ENCODE measurements at regions of chr13 and their contacts with region 1.

Region 1: DNA sequence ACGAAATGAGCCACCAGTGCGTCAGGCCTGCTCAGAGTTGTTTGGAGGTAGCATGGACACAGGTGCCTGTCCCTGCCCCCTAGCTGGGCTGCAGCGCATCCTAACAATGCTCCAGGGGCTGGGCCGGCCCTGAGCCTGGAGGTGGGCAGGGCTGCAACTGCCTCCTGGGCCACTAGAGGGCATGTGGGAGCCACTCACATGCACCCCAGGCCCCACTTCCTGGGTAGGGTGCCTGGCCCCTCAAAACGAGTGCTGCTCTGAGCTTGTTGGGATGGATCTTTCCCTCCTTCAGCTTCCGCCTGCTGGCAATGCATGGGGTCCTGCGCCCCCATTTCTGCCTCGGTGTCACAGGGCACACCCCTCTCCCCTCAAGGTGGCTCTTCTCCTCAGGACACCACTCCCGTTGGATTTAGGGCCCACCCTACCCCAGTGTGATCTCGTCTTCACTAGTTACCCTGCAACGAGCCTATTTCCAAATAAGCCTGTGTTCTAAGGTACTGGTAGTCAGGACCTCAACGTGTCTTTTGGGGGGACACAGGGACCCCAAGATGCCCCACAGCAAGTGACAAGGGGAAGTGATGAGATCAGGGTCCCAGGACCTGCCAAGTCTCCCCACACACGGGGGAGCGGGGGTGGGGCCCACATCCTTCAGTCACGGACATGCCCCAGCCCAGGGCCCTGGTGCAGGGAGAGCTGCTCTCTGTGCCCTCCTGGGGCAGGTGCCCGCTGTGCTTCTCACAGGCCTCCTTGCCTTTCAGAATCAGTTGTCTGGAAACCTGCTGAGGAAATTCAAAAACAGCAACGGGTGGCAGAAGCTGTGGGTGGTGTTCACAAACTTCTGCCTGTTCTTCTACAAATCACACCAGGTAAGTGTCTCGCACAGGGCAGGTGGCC is 131.3 kb downstream of the STK24 start:
- DNase-seq: peak; percentile 85
- H3K4me3 Mint-ChIP-seq: no peak overlapping the region
- H3K27ac Mint-ChIP-seq: peak overlapping the region; percentile 88
- H3K4me1 Mint-ChIP-seq: peaks cover 17% of the 10 kb centered on the region
- H3K27me3 Mint-ChIP-seq: no peaks in the 10 kb centered on the region

Region 2: DNA sequence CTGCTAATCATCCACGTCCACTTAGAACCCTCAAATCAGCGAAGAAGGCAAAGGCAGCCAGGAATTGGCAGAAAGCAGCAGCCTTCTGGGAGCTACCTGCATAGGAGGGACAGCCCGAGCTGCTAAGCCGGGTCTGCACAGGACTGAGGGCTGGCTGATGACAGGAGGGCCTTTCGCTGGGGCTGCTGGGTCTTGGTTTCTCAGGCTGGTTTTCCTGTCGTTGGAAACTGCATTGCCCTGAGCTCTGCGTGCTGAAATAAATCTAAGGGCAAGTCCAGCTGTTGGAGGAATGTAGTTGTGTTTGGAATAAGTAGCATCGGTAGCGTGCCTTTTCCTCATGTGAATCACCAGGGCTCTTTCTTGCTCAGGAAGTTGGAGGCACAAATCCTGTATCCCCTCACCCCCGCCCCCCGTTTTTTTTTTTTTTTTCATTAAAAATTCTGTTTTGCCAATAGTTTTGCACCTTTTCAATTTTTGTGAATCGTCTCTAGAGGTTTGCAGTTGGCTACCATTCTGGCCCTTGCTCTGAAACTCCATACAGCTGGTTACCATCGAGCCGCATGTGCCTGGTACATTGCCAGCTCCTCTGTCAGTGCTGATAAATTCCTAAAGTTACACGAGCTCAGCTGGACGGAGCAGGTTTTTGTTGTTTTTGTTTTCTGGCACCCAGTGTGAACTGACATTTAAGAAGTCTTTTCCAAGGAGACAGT is 74.6 kb before region 1 on chr13:
- CTCF ChIA-PET with region 1: no interaction called
- intact Hi-C with region 1: no loop called
- DNase-seq: no peak
- H3K4me3 Mint-ChIP-seq: no peak overlapping the region
- H3K27ac Mint-ChIP-seq: no peak overlapping the region
- H3K4me1 Mint-ChIP-seq: no peaks in the 10 kb centered on the region
- H3K27me3 Mint-ChIP-seq: peaks cover 8% of the 10 kb centered on the region

Region 3: GRCh38 chr13:98390086-98390715 is 55.4 kb before region 1 on chr13:
- CTCF ChIA-PET with region 1: no interaction called
- intact Hi-C with region 1: no loop called
- DNase-seq: no peak
- H3K4me3 Mint-ChIP-seq: no peak overlapping the region
- H3K27ac Mint-ChIP-seq: no peak overlapping the region
- H3K4me1 Mint-ChIP-seq: no peaks in the 10 kb centered on the region
- H3K27me3 Mint-ChIP-seq: peaks cover 2% of the 10 kb centered on the region

Region 4: GRCh38 chr13:98466634-98467236 is 21.1 kb after region 1 on chr13:
- CTCF ChIA-PET with region 1: interaction called, 23 read pairs
- intact Hi-C with region 1: no loop called
- DNase-seq: peak; percentile 60
- H3K4me3 Mint-ChIP-seq: no peak overlapping the region
- H3K27ac Mint-ChIP-seq: no peak overlapping the region
- H3K4me1 Mint-ChIP-seq: peaks cover 19% of the 10 kb centered on the region
- H3K27me3 Mint-ChIP-seq: no peaks in the 10 kb centered on the region

Region 5: GRCh38 chr13:98509271-98510155 is 63.9 kb after region 1 on chr13:
- CTCF ChIA-PET with region 1: no interaction called
- intact Hi-C with region 1: loop called (anchors 1 kb)
- DNase-seq: peak; percentile 69
- H3K4me3 Mint-ChIP-seq: peak overlapping the region; percentile 29
- H3K27ac Mint-ChIP-seq: peak overlapping the region; percentile 77
- H3K4me1 Mint-ChIP-seq: peaks cover 94% of the 10 kb centered on the region
- H3K27me3 Mint-ChIP-seq: no peaks in the 10 kb centered on the region

Region 6: DNA sequence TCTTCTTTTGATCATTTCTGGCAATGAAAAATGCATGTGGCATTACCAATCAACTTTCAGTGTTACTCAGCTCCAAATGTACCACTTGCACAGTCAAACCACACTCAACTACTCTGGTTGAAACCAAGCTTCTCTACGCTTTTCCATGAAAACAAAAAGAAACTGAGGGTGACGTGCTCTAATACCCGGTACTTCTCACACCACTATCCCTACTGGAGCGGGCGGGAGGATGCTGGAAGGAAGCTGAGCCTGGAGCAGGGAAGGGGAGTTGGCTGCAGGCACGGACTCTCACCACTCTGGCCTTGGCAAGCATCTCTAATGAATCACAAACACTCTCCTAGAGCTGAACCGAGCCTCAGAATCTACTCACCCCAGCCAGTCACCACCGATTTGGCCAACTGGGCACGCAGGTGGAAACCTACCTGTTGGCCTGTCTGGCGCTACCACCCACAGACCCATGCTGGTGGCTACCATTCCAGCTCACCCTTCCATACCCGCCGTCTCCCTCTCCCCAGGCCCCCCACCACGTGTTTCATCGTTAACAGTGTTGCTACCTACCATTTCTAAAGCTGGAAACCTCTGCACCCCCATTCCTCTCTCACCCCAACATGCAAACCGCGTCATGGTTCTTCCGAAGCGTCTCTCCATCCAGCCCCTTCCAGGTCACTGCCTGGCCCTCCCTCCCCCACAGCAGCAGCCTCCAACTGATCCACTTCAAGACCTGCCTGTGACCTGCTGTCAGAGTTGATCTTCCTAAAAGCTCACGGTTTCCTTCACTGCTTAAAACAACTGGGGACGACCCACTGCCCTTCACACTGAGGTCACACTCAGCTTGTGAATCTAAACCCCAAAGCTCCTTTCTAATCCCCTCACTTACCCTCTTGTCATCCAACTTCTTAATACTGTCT is 83.3 kb after region 1 on chr13:
- CTCF ChIA-PET with region 1: interaction called, 15 read pairs
- intact Hi-C with region 1: no loop called
- DNase-seq: peak; percentile 43
- H3K4me3 Mint-ChIP-seq: no peak overlapping the region
- H3K27ac Mint-ChIP-seq: peak overlapping the region; percentile 75
- H3K4me1 Mint-ChIP-seq: peaks cover 91% of the 10 kb centered on the region
- H3K27me3 Mint-ChIP-seq: no peaks in the 10 kb centered on the region

Region 7: GRCh38 chr13:98664039-98664438 is 218.5 kb after region 1 on chr13:
- CTCF ChIA-PET with region 1: interaction called, 24 read pairs
- intact Hi-C with region 1: no loop called
- DNase-seq: peak; percentile 85
- H3K4me3 Mint-ChIP-seq: no peak overlapping the region
- H3K27ac Mint-ChIP-seq: peak overlapping the region; percentile 44
- H3K4me1 Mint-ChIP-seq: peaks cover 19% of the 10 kb centered on the region
- H3K27me3 Mint-ChIP-seq: no peaks in the 10 kb centered on the region

Region 8: DNA sequence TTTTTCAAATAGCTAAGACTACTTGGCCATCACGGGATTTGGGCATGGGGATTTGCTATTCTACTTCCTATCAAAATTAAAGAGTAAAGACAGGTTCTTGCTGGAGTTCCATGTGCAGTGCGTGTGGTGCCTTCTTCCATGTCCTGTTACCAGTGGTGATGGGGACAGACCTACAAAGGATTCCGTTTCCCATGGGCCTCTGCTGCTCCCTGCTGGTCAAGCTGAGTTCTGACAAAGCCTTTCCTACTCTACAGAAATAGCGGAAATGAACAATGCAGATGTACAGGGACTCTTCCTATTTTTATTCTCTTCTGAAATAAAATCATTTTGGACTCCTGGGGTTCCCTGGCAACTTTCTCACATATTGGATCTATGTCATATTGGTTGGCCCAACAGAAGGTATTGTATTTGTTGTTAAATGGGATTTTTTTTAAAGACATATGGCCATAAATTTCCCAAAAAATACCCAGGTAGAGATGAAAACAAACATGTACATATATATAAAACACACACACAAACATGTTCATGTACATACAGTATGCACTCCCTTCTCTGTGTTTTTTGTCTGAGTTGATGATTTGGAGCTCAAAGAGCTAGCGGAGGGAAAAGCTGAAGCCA is 397.4 kb after region 1 on chr13:
- CTCF ChIA-PET with region 1: no interaction called
- intact Hi-C with region 1: loop called (anchors 1 kb)
- DNase-seq: peak; percentile 85
- H3K4me3 Mint-ChIP-seq: no peak overlapping the region
- H3K27ac Mint-ChIP-seq: no peak overlapping the region
- H3K4me1 Mint-ChIP-seq: peaks cover 6% of the 10 kb centered on the region
- H3K27me3 Mint-ChIP-seq: no peaks in the 10 kb centered on the region